CD8-positive, alpha-beta T cell (primary cell): ENCODE measurements at regions of chr14 and their contacts with region 1.

Region 1: GRCh38 chr14:70907176-70907995 is at the start of gene PCNX1:
- DNase-seq: peak; percentile 84 to 95 (median 89)
- ATAC-seq: peak; percentile 80
- H3K4me3 ChIP-seq: peak within 1 kb of the TSS; percentile 87 to 95
- H3K4me3 Mint-ChIP-seq: peak within 1 kb of the TSS; percentile 96
- H3K27ac ChIP-seq: peak within 1 kb of the TSS; percentile 70 to 92
- H3K27ac Mint-ChIP-seq: peak within 1 kb of the TSS; percentile 94
- H3K4me1 ChIP-seq: peaks cover 41% of the 10 kb centered on the region
- H3K4me1 Mint-ChIP-seq: peaks cover 57% of the 10 kb centered on the region
- H3K27me3 ChIP-seq: no peaks in the 10 kb centered on the region
- H3K27me3 Mint-ChIP-seq: no peaks in the 10 kb centered on the region
- CTCF ChIP-seq: peak; percentile 83
- total RNA-seq, gene PCNX1: 54.0 to 63.5 TPM

Region 2: GRCh38 chr14:70640938-70641547 is 266.3 kb before region 1 on chr14:
- CTCF ChIA-PET with region 1: no interaction called
- POLR2A ChIA-PET with region 1: no interaction called
- intact Hi-C with region 1: loop called in 1 of 2 experiments (anchors 10 kb)
- DNase-seq: peak in 7 of 9 experiments; percentile 30 to 79 (median 66)
- ATAC-seq: peak; percentile 66
- H3K4me3 ChIP-seq: peak overlapping the region; percentile 59 to 63
- H3K4me3 Mint-ChIP-seq: peak overlapping the region; percentile 99
- H3K27ac ChIP-seq: peak overlapping the region; percentile 24 to 26
- H3K27ac Mint-ChIP-seq: peak overlapping the region; percentile 97
- H3K4me1 ChIP-seq: peaks cover 33% of the 10 kb centered on the region
- H3K4me1 Mint-ChIP-seq: peaks cover 51% of the 10 kb centered on the region
- H3K27me3 ChIP-seq: no peaks in the 10 kb centered on the region
- H3K27me3 Mint-ChIP-seq: no peaks in the 10 kb centered on the region
- CTCF ChIP-seq: no peak

Region 3: GRCh38 chr14:70670992-70671651 is 236.3 kb before region 1 on chr14:
- CTCF ChIA-PET with region 1: no interaction called
- POLR2A ChIA-PET with region 1: no interaction called
- intact Hi-C with region 1: no loop called
- DNase-seq: no peak
- ATAC-seq: no peak
- H3K4me3 ChIP-seq: no peak overlapping the region
- H3K4me3 Mint-ChIP-seq: no peak overlapping the region
- H3K27ac ChIP-seq: no peak overlapping the region
- H3K27ac Mint-ChIP-seq: no peak overlapping the region
- H3K4me1 ChIP-seq: peaks cover 17% of the 10 kb centered on the region
- H3K4me1 Mint-ChIP-seq: peaks cover 20% of the 10 kb centered on the region
- H3K27me3 ChIP-seq: no peaks in the 10 kb centered on the region
- H3K27me3 Mint-ChIP-seq: no peaks in the 10 kb centered on the region
- CTCF ChIP-seq: no peak

Region 4: GRCh38 chr14:70821584-70822529 is 85.5 kb before region 1 on chr14:
- CTCF ChIA-PET with region 1: interaction called, 47 read pairs
- POLR2A ChIA-PET with region 1: interaction called, 8 read pairs
- intact Hi-C with region 1: loop called in 1 of 2 experiments (anchors 2 kb)
- DNase-seq: peak in 8 of 9 experiments; percentile 35 to 73 (median 58)
- ATAC-seq: peak; percentile 39
- H3K4me3 ChIP-seq: peak overlapping the region; percentile 57 to 67
- H3K4me3 Mint-ChIP-seq: peak overlapping the region; percentile 76
- H3K27ac ChIP-seq: peak overlapping the region in 1 of 2 experiments; percentile 15
- H3K27ac Mint-ChIP-seq: no peak overlapping the region
- H3K4me1 ChIP-seq: peaks cover 17% of the 10 kb centered on the region
- H3K4me1 Mint-ChIP-seq: peaks cover 16% of the 10 kb centered on the region
- H3K27me3 ChIP-seq: no peaks in the 10 kb centered on the region
- H3K27me3 Mint-ChIP-seq: peaks cover 7% of the 10 kb centered on the region
- CTCF ChIP-seq: no peak

Region 5: DNA sequence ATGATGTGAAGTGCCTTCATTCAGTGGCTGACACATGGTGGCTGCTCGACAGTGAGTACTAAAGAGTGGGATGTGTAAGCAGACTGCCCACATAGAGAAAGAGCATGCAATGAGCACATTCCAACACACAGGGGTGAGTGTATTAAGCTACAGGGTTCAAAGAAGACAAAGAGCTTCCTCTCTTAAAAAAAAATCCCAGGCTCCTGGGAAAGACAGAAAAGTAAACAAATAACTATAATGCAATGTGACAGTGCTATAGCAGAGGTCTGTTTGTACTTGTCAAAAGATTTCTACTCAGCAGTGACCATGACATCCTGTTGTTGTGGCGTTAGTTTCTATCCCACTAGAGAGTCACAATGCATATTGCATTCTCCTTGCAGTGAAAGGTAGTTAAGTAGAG is 12.5 kb before region 1 on chr14:
- CTCF ChIA-PET with region 1: interaction called, 21 read pairs
- POLR2A ChIA-PET with region 1: interaction called, 4 read pairs
- intact Hi-C with region 1: no loop called
- DNase-seq: no peak
- ATAC-seq: no peak
- H3K4me3 ChIP-seq: no peak overlapping the region
- H3K4me3 Mint-ChIP-seq: no peak overlapping the region
- H3K27ac ChIP-seq: no peak overlapping the region
- H3K27ac Mint-ChIP-seq: no peak overlapping the region
- H3K4me1 ChIP-seq: peaks cover 27% of the 10 kb centered on the region
- H3K4me1 Mint-ChIP-seq: peaks cover 31% of the 10 kb centered on the region
- H3K27me3 ChIP-seq: no peaks in the 10 kb centered on the region
- H3K27me3 Mint-ChIP-seq: no peaks in the 10 kb centered on the region
- CTCF ChIP-seq: no peak

Region 6: DNA sequence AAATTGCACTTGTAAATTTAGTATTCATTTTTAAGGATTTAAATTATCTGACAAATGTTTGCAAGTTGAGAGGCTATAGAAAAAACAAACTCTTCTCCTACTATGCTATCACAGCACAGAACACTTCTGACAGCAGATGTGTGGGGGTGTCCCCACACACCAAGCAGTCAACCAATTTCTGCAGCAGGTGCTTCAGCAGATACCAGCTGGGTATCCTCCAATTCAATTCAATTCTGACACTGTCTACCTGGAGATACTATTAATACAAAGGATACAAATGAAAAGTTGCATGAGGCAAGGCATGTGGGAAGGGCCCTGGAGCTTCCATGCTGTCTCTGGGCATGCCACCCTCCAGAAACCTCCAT is 34.9 kb after region 1 on chr14:
- CTCF ChIA-PET with region 1: interaction called, 18 read pairs
- POLR2A ChIA-PET with region 1: interaction called, 15 read pairs
- intact Hi-C with region 1: loop called in 1 of 2 experiments (anchors 1 kb)
- DNase-seq: no peak
- ATAC-seq: peak; percentile 23
- H3K4me3 ChIP-seq: no peak overlapping the region
- H3K4me3 Mint-ChIP-seq: peak overlapping the region; percentile 11
- H3K27ac ChIP-seq: no peak overlapping the region
- H3K27ac Mint-ChIP-seq: peak overlapping the region; percentile 86
- H3K4me1 ChIP-seq: peaks cover 22% of the 10 kb centered on the region
- H3K4me1 Mint-ChIP-seq: peaks cover 69% of the 10 kb centered on the region
- H3K27me3 ChIP-seq: no peaks in the 10 kb centered on the region
- H3K27me3 Mint-ChIP-seq: no peaks in the 10 kb centered on the region
- CTCF ChIP-seq: no peak

Region 7: GRCh38 chr14:70972107-70972976 is 65.0 kb after region 1 on chr14:
- CTCF ChIA-PET with region 1: interaction called, 37 read pairs
- POLR2A ChIA-PET with region 1: interaction called, 5 read pairs
- intact Hi-C with region 1: loop called (anchors 1 kb)
- DNase-seq: peak; percentile 65 to 90 (median 85)
- ATAC-seq: peak; percentile 81
- H3K4me3 ChIP-seq: no peak overlapping the region
- H3K4me3 Mint-ChIP-seq: no peak overlapping the region
- H3K27ac ChIP-seq: peak overlapping the region in 1 of 2 experiments; percentile 0
- H3K27ac Mint-ChIP-seq: peak overlapping the region; percentile 53
- H3K4me1 ChIP-seq: peaks cover 25% of the 10 kb centered on the region
- H3K4me1 Mint-ChIP-seq: peaks cover 48% of the 10 kb centered on the region
- H3K27me3 ChIP-seq: no peaks in the 10 kb centered on the region
- H3K27me3 Mint-ChIP-seq: no peaks in the 10 kb centered on the region
- CTCF ChIP-seq: peak; percentile 81